ENCODE measurements at regions of chr2 and their contacts with region 1.

Region 1: GRCh38 chr2:234544659-234545611 is 48.1 kb upstream of the ARL4C start:
- DNase-seq: peak; percentile 76
- H3K4me3 ChIP-seq: no peak overlapping the region
- H3K27ac ChIP-seq: no peak overlapping the region
- H3K4me1 ChIP-seq: peaks cover 3% of the 10 kb centered on the region; the same call in 1 of the 2 replicates
- H3K27me3 ChIP-seq: no peaks in the 10 kb centered on the region

Region 2: GRCh38 chr2:233982421-233983121 is 562.4 kb before region 1 on chr2:
- in situ Hi-C with region 1: loop called (anchors 5 kb)
- DNase-seq: peak; percentile 94
- H3K4me3 ChIP-seq: peak overlapping the region; percentile 57
- H3K27ac ChIP-seq: peak overlapping the region; percentile 65
- H3K4me1 ChIP-seq: peaks cover 32% of the 10 kb centered on the region
- H3K27me3 ChIP-seq: no peaks in the 10 kb centered on the region

Region 3: DNA sequence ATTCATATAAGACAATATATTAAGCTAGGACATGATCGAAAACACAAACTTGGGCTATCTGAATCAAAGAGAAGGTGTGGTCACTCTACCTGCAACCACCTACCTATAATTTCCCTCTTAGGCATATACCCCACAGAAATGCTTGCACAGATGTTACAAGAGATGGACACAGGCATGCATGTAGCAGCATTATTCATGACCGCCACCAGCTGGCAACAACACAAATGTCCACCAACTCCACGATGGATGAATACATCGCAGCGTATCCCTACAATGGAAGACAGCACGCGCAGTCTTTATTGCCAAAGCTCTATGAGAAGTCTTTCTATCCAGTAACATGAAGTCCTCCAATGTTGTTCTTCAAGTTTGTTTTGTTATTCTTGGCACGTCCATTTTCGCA is 138.8 kb before region 1 on chr2:
- in situ Hi-C with region 1: no loop called
- DNase-seq: no peak
- H3K4me3 ChIP-seq: no peak overlapping the region
- H3K27ac ChIP-seq: no peak overlapping the region
- H3K4me1 ChIP-seq: peaks cover 15% of the 10 kb centered on the region
- H3K27me3 ChIP-seq: no peaks in the 10 kb centered on the region

Region 4: DNA sequence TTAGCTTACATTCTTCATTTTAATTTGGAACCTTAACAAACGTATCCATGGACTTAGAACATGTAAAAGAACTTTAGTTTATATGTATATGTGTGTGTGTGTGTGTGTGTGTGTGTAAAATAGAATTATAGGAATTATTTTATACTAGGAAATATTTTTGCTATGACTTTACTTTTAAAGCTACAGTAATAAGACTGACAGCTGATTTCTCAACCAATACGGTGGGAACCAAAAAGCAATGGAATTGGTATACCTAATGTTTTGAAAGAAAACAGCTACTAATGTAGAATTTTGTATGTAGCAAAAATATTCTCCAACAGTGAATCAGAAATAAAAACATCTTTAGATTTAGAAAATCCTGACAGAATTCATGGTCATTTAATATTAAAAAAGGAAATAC is 98.5 kb after region 1 on chr2:
- in situ Hi-C with region 1: no loop called
- DNase-seq: peak; percentile 43
- H3K4me3 ChIP-seq: no peak overlapping the region
- H3K27ac ChIP-seq: no peak overlapping the region
- H3K4me1 ChIP-seq: no peaks in the 10 kb centered on the region
- H3K27me3 ChIP-seq: no peaks in the 10 kb centered on the region